Natural killer cell (primary cell): ENCODE measurements at regions of chr11 and their contacts with region 1.

Region 1: DNA sequence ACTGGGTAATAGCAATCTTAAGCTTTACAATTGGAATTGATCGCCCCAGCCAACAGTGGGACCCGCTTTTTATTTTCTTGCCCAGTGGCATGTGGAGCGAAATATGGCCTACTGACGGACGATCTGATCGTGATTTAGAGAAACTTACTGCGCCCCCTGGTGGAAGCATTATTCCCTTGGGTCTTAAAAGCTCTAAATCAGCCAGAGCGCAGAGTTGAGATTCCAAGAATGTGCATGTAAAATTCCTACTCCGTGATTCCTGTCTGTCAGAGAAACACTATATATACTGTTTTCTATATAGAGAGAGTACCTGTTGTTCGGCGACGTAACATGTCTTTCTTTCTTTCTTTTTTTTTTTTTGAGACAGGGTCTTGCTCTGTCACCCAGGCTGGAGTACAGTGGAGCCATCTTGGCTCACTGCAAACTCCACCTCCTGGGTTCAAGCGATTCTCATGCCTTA is 3.7 kb upstream of the DPF2 start:
- DNase-seq: peak; percentile 66 to 93
- ATAC-seq: peak in 2 of 3 donors; percentile 24 to 35
- H3K4me3 ChIP-seq: no peak overlapping the region
- H3K4me3 Mint-ChIP-seq: no peak overlapping the region
- H3K27ac ChIP-seq: no peak overlapping the region
- H3K27ac Mint-ChIP-seq: peak overlapping the region; percentile 38 to 69
- H3K4me1 ChIP-seq: peaks cover 8% of the 10 kb centered on the region
- H3K4me1 Mint-ChIP-seq: peaks cover 18 to 19% of the 10 kb centered on the region in 2 donors
- H3K27me3 ChIP-seq: no peaks in the 10 kb centered on the region
- H3K27me3 Mint-ChIP-seq: no peaks in the 10 kb centered on the region
- CTCF ChIP-seq: peak; percentile 84

Region 2: DNA sequence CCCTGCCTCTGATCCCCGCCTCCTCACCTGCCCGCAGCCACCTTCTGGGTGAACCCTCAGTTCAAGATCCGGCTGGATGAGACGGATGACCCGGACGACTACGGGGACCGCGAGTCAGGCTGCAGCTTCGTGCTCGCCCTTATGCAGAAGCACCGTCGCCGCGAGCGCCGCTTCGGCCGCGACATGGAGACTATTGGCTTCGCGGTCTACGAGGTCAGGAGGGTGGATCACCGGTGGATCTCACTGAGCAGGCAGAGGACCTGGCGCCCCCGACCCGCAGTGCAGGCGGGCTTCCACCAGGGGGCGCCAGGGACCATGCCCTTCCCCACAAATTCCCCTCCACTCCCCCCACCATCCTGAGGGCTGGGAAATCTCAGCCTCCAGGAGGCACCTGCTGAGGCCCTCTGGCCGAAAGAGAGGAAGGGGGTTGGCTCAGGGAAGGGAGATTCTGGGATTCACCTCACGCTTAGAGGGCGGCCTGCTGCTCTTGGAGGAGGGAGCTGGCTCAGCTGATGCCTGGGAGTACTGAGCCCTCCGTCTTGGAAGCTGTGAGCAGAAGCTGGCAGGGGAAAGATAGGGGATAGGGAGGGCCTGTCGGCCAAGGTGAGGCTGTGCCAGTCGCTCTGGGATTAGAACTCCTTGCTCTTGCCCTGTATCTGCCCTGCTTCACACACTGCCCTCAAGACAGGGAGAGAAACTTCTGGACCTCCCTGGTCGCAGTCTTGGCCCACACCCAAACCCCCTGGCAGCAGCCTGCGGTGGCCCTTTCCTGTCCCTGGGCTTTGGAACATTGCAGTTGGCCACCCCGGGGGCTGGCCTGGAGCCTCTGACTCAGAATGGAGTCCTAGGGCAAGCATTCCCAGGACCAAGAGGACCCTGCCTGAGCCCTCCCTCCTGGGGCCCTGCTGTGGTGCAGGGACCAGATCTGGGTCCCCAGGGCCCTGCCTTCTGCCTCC is 125.0 kb before region 1 on chr11:
- intact Hi-C with region 1: loop called (anchors 5 kb)
- DNase-seq: peak; percentile 57 to 70
- ATAC-seq: peak; percentile 78 to 82 (median 78)
- H3K4me3 ChIP-seq: no peak overlapping the region
- H3K4me3 Mint-ChIP-seq: no peak overlapping the region
- H3K27ac ChIP-seq: no peak overlapping the region
- H3K27ac Mint-ChIP-seq: no peak overlapping the region
- H3K4me1 ChIP-seq: peaks cover 2% of the 10 kb centered on the region
- H3K4me1 Mint-ChIP-seq: peaks cover 11% of the 10 kb centered on the region in 2 donors
- H3K27me3 ChIP-seq: no peaks in the 10 kb centered on the region
- H3K27me3 Mint-ChIP-seq: no peaks in the 10 kb centered on the region
- CTCF ChIP-seq: peak; percentile 96

Region 3: DNA sequence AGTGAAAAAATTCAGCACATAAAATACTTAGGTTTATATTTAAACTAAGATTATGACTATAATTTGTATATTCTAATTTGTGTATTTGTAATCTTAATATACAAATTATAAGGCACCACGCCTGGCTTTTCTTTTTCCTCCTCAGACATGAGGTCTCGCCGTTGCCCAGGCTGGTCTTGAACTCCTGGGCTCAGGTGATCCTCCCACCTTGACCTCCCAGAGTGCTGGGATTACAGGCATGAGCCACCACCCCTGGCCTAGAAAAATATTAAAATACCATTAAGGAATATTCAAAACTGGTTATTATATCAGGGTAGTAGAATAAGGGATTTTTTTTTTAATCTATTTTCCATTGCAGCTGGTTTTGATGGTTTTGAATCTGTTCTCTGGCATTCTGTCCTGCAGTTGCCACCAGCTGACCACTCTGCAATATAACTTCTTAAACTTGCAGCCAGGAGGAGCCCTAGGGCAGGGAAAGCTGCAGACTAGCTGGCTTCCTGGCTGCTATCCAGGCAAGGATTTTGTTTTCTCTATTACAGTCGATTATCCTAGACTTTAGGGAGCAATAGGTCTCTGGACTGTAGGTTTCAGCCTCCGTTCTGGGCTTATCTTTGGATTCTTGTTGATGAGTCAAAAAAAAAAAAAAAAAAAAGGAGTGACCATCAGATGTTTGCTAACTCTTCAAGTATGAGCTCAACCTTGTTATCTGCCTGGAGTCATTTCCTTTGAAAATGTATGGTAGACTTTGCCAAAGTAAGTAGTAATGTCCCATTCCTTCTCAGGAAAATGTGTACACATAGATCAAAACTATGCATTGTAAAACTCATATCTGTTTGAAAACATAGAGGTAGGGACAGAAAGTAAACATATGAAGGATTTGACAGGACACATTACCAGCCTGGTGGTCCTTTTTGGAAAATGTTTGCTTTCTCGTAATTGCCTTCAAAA is 55.0 kb before region 1 on chr11:
- intact Hi-C with region 1: loop called (anchors 1 kb)
- DNase-seq: peak in 1 of 2 donors; percentile 65
- ATAC-seq: peak in 2 of 3 donors; percentile 62 to 63
- H3K4me3 ChIP-seq: no peak overlapping the region
- H3K4me3 Mint-ChIP-seq: no peak overlapping the region
- H3K27ac ChIP-seq: no peak overlapping the region
- H3K27ac Mint-ChIP-seq: no peak overlapping the region
- H3K4me1 ChIP-seq: no peaks in the 10 kb centered on the region
- H3K4me1 Mint-ChIP-seq: no peaks in the 10 kb centered on the region
- H3K27me3 ChIP-seq: no peaks in the 10 kb centered on the region
- H3K27me3 Mint-ChIP-seq: no peaks in the 10 kb centered on the region
- CTCF ChIP-seq: peak; percentile 44

Region 4: GRCh38 chr11:65354265-65355012 is 24.5 kb after region 1 on chr11 and contains the start of gene TIGD3:
- intact Hi-C with region 1: loop called (anchors 1 kb)
- DNase-seq: peak; percentile 96 to 97
- ATAC-seq: peak; percentile 96 to 99 (median 97)
- H3K4me3 ChIP-seq: peak within 1 kb of the TSS; percentile 49
- H3K4me3 Mint-ChIP-seq: peak within 1 kb of the TSS; percentile 92
- H3K27ac ChIP-seq: peak within 1 kb of the TSS; percentile 44
- H3K27ac Mint-ChIP-seq: peak within 1 kb of the TSS; percentile 79 to 94
- H3K4me1 ChIP-seq: peaks cover 19% of the 10 kb centered on the region
- H3K4me1 Mint-ChIP-seq: peaks cover 15 to 20% of the 10 kb centered on the region in 2 donors
- H3K27me3 ChIP-seq: no peaks in the 10 kb centered on the region
- H3K27me3 Mint-ChIP-seq: no peaks in the 10 kb centered on the region
- CTCF ChIP-seq: no peak
- total RNA-seq, gene TIGD3: 0.70 to 2.2 (median 1.2) TPM